ENCODE measurements at regions of chr22 and their contacts with region 1.

Region 1: GRCh38 chr22:37843741-37843990 is 468 bp downstream of the ANKRD54 start:
- DNase-seq: peak; percentile 58
- H3K4me3 Mint-ChIP-seq: peak overlapping the region; percentile 87
- H3K27ac Mint-ChIP-seq: peak overlapping the region; percentile 88
- H3K4me1 Mint-ChIP-seq: peaks cover 22% of the 10 kb centered on the region
- H3K27me3 Mint-ChIP-seq: no peaks in the 10 kb centered on the region

Region 2: GRCh38 chr22:37768273-37768672 is 75.4 kb before region 1 on chr22:
- intact Hi-C with region 1: no loop called
- DNase-seq: no peak
- H3K4me3 Mint-ChIP-seq: no peak overlapping the region
- H3K27ac Mint-ChIP-seq: no peak overlapping the region
- H3K4me1 Mint-ChIP-seq: no peaks in the 10 kb centered on the region
- H3K27me3 Mint-ChIP-seq: no peaks in the 10 kb centered on the region

Region 3: DNA sequence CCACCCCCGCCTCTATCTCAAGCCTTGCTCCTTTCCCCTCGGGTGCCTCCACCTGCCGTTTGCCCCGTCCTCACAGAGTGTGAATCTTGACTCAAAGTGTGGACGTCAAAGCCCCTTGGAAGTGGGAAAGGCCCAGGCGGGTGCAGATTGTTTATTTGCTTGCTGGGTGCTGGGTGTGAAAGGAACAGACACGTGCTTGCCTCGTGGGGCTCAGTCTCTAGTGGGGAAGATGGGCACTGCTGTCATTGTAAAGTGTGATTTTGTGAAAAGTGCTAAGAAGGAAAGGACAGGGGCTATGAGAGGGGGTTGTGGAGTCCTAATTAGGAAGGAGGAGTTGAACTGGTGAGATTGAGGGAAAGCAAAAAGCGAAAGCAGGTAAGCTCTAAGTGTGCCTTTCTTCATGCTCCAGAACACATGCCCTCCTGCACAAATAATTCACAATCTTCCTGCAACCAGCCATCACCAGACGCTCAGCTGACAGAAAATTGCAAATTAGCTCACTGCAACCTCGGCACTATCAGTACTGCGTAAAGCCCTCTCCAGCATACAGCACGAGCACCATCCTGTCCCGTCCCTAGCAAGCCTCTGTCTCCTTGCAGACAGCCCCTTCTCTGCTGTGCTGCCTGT is 45.7 kb before region 1 on chr22:
- intact Hi-C with region 1: no loop called
- DNase-seq: no peak
- H3K4me3 Mint-ChIP-seq: no peak overlapping the region
- H3K27ac Mint-ChIP-seq: no peak overlapping the region
- H3K4me1 Mint-ChIP-seq: peaks cover 7% of the 10 kb centered on the region
- H3K27me3 Mint-ChIP-seq: peaks cover 18% of the 10 kb centered on the region

Region 4: DNA sequence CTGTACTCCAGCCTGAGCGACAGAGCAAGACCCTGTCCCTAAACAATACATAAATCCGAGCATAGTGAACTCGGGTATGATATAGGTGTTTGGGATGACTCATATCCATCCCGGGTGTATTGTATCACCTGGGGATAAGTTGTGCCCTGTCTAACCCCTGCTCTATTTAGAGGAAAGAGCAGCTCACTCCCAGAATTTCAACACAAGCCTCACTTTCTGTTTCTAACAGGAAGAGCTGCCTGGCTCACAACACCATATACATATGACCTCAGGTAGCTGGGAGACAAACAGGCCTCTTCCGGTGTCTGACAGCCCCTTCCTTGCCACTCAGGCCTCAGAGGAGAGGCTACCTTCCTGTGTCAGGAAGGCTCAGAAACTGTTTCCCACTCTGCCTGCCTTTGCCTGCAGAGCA is 52.5 kb after region 1 on chr22:
- intact Hi-C with region 1: loop called (anchors 5 kb)
- DNase-seq: peak; percentile 42
- H3K4me3 Mint-ChIP-seq: peak overlapping the region; percentile 15
- H3K27ac Mint-ChIP-seq: peak overlapping the region; percentile 89
- H3K4me1 Mint-ChIP-seq: peaks cover 16% of the 10 kb centered on the region
- H3K27me3 Mint-ChIP-seq: no peaks in the 10 kb centered on the region

Measured in activated T-helper 2 cell treated with anti-CD3 and anti-CD28 coated beads, Interferon-gamma antibody, Interleukin-2, Interleukin-4, amounts not matched to agents 10 μg/mL and 5 μg/mL and 100 μg/mL, durations not matched to agents 14 hours and 24 hours and 36 hours (primary cell).